Mammary epithelial cell (primary cell): ENCODE measurements at regions of chr13 and their contacts with region 1.

Region 1: DNA sequence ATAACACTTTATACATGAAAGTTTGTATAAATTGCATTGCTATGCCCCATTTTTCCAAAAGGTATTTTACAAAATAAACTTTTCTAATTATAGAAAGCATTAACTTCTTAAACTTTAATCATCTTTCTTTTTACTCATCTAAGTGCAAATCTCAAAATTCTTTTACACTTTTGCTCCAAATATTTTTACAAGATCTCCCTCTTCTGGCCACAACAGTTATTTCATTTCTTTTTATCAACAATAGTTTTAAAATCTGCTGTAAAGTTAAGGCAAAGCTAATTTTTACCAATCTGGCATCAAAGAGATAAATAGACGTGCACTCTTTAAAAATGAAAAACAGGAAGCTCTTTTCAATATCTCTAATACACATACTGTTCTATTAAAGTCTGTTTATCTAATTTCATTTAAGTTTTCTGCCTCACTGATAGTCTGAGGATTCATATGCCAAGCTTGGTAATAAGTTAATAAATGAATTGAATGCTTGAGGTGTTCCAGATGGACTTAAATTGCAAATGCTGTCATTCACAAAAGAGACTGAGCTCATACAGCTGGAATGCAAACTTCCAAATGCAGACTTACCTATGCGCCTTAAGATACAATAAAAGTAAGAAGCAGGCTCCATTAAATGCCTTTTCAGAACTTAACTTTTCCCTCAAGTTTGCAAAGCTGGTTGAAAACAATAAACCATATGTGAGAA is 583.0 kb upstream of the ATXN8OS start:
- DNase-seq: no peak
- H3K4me3 ChIP-seq: no peak overlapping the region
- H3K27ac ChIP-seq: no peak overlapping the region
- H3K4me1 ChIP-seq: no peaks in the 10 kb centered on the region
- H3K27me3 ChIP-seq: peaks cover 4% of the 10 kb centered on the region
- CTCF ChIP-seq: peak in 1 of 2 donors; percentile 29

Region 2: DNA sequence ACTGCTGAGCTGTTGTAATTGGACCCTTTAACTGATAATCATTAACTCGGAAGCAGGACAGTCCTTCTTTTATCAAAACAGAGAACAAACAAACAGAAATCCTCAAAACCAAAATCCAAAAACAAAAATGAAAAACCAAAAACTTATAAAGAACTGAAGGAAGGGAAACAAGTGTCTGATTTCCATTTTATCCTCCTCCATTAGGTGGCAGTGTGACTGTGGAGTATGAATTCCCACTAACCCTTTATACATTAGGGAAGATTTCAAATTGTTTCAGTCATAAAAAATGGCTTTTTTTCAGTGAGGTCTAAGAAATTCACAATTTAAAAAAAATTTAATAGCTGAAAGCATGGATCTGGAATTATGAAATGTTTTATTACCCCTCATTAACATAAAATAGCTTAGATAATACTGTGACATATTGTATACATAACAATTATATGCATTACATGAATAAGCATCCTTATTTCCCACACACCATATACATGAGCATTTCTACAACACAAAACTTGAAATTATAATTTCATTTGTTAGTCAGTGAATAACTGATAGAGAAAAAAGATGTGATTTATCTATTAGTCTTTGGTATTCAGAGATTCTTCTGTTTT is 1220.2 kb before region 1 on chr13:
- CTCF ChIA-PET with region 1: no interaction called
- dilution Hi-C with region 1: no loop called
- in situ Hi-C with region 1: no loop called
- intact Hi-C with region 1: loop called (anchors 5 kb)
- DNase-seq: peak; percentile 9
- H3K4me3 ChIP-seq: no peak overlapping the region
- H3K27ac ChIP-seq: no peak overlapping the region
- H3K4me1 ChIP-seq: no peaks in the 10 kb centered on the region
- H3K27me3 ChIP-seq: no peaks in the 10 kb centered on the region
- CTCF ChIP-seq: peak; percentile 61 to 70

Region 3: GRCh38 chr13:69109891-69110525 is 414.6 kb before region 1 on chr13:
- CTCF ChIA-PET with region 1: no interaction called
- dilution Hi-C with region 1: no loop called
- in situ Hi-C with region 1: no loop called
- intact Hi-C with region 1: loop called (anchors 5 kb)
- DNase-seq: peak; percentile 0
- H3K4me3 ChIP-seq: no peak overlapping the region
- H3K27ac ChIP-seq: no peak overlapping the region
- H3K4me1 ChIP-seq: peaks cover 4% of the 10 kb centered on the region
- H3K27me3 ChIP-seq: no peaks in the 10 kb centered on the region
- CTCF ChIP-seq: no peak

Region 4: DNA sequence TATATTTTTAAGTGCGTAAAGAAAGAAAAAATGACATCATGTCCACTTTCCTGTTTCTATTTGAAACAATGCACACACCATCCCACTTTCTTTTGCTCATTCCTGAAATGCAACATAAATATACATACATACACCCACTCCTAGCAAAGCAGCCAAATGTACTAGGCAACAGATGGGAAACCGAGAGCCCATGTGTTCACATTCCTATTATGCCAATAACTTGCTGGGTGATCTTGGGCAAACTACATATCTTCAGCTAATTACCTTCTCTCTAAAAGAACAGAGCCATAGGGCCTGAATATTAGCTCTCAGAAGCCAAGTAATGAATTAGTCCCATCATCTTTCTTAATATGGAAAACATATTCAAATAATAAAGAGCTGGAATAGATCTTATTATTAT is 27.6 kb before region 1 on chr13:
- CTCF ChIA-PET with region 1: no interaction called
- dilution Hi-C with region 1: no loop called
- in situ Hi-C with region 1: no loop called
- intact Hi-C with region 1: no loop called
- DNase-seq: no peak
- H3K4me3 ChIP-seq: no peak overlapping the region
- H3K27ac ChIP-seq: no peak overlapping the region
- H3K4me1 ChIP-seq: no peaks in the 10 kb centered on the region
- H3K27me3 ChIP-seq: no peaks in the 10 kb centered on the region
- CTCF ChIP-seq: no peak

Region 5: DNA sequence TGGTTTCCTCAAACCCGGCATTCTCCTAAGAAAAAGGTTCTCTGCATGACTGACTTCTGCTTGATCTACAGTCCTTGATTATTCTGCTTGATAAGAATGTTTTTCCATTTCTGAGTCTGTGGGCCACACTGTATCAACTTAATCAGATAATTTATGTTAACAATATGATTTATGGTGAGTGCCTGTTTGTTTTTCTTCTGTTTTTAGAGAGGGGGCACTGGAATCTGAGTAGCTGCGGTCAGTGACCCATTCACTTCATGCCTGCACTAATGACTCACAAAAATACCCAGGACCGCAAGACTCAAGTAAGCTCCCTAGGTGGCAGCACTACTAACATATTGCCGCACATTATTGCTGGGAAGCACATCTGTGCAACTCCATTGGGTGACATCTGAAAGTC is 40.7 kb after region 1 on chr13:
- CTCF ChIA-PET with region 1: no interaction called
- dilution Hi-C with region 1: no loop called
- in situ Hi-C with region 1: no loop called
- intact Hi-C with region 1: no loop called
- DNase-seq: peak; percentile 45
- H3K4me3 ChIP-seq: no peak overlapping the region
- H3K27ac ChIP-seq: no peak overlapping the region
- H3K4me1 ChIP-seq: no peaks in the 10 kb centered on the region
- H3K27me3 ChIP-seq: no peaks in the 10 kb centered on the region
- CTCF ChIP-seq: peak; percentile 46 to 69

Region 6: DNA sequence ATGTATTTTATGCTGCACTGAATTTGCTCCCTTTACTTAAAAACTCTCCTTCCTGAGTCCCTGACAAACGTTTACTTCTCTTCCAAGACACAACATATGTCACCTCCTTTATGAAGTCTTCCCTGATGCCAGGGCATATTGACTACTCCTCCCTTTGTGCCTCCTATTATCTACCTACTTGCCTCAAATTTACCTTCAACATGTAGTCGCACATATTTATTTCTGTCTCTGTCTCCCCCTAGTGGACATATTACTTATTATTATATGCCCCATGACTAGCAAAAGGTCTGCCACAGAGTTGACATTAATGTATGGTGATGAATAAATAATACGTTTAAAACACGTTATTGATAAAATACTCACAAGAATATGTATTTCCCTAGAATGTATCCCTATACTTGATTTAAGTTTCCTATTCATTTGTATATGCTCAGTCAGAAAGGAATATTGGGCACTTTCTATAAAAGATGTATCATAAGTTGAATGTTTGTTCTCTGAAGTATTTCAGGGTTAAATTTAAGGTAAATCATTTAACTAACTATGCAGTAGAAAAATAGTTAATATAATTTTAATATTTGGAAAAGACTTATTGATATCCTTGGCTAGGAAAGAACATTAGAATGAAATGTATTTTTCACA is 332.7 kb after region 1 on chr13:
- CTCF ChIA-PET with region 1: no interaction called
- dilution Hi-C with region 1: no loop called
- in situ Hi-C with region 1: loop called in 1 of 2 experiments (anchors 25 kb)
- intact Hi-C with region 1: no loop called
- DNase-seq: peak; percentile 18
- H3K4me3 ChIP-seq: no peak overlapping the region
- H3K27ac ChIP-seq: no peak overlapping the region
- H3K4me1 ChIP-seq: no peaks in the 10 kb centered on the region
- H3K27me3 ChIP-seq: no peaks in the 10 kb centered on the region
- CTCF ChIP-seq: peak; percentile 53 to 60

Region 7: GRCh38 chr13:70568571-70568970 is 1044.0 kb after region 1 on chr13:
- CTCF ChIA-PET with region 1: no interaction called
- dilution Hi-C with region 1: no loop called
- in situ Hi-C with region 1: loop called (anchors 25 kb)
- intact Hi-C with region 1: no loop called
- DNase-seq: peak; percentile 11
- H3K4me3 ChIP-seq: no peak overlapping the region
- H3K27ac ChIP-seq: no peak overlapping the region
- H3K4me1 ChIP-seq: no peaks in the 10 kb centered on the region
- H3K27me3 ChIP-seq: no peaks in the 10 kb centered on the region
- CTCF ChIP-seq: peak; percentile 67 to 68